ENCODE measurements at regions of chr6 and their contacts with region 1.

Region 1: DNA sequence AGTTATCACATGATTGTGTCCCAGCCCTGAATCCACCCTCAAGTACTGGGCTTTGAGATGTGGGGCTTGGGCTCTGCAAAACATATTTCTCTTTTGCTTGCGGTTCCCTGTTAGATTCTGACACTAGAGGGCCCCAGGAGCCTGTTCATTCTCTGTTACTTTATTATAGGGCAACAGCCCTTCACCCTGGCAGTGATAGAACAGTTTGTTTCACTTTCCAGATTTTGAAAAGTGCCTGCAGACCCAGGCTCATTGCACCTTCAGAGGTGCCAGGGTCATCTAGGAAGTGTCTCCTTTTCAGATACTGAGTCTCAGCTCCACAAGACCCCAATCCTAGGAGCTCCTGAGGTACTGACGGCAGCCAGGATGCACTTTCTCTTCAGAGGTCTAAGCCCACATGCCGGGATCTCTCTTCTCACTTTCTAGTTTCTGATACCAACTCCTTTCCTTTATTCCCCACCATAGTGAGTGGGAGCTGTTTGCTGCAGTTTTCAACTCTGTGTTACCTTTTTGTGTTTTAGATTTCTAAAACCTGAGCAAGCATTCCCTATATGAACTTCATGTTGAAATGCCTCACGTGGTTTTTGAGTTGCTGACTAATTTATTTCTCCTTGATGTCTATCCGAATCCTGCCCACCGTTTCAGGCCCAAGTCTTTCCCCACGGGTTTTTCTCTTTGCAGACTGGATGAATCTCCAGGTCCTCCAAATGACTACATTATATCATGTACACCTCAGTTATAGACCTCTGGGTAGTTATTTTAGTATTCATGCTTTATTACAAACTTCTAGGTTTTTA is 10.9 kb downstream of the ABT1 start:
- H3K4me3 Mint-ChIP-seq: peak overlapping the region; percentile 30
- H3K27ac Mint-ChIP-seq: no peak overlapping the region
- H3K4me1 Mint-ChIP-seq: peaks cover 30% of the 10 kb centered on the region
- H3K27me3 Mint-ChIP-seq: peaks cover 30% of the 10 kb centered on the region

Region 2: GRCh38 chr6:27078734-27079357 is 471.2 kb after region 1 on chr6:
- intact Hi-C with region 1: loop called (anchors 1 kb)
- H3K4me3 Mint-ChIP-seq: no peak overlapping the region
- H3K27ac Mint-ChIP-seq: no peak overlapping the region
- H3K4me1 Mint-ChIP-seq: peaks cover 6% of the 10 kb centered on the region
- H3K27me3 Mint-ChIP-seq: peaks cover 35% of the 10 kb centered on the region

Region 3: GRCh38 chr6:27146706-27147505 is 539.3 kb after region 1 on chr6:
- intact Hi-C with region 1: loop called (anchors 10 kb)
- H3K4me3 Mint-ChIP-seq: no peak overlapping the region
- H3K27ac Mint-ChIP-seq: no peak overlapping the region
- H3K4me1 Mint-ChIP-seq: peaks cover 5% of the 10 kb centered on the region
- H3K27me3 Mint-ChIP-seq: no peaks in the 10 kb centered on the region